Activated CD4-positive, alpha-beta T cell treated with anti-CD3 and anti-CD28 coated beads, Interleukin-2, amount 10 ng/mL, durations not matched to agents 7 days and 5 days (primary cell): ENCODE measurements at regions of chr3 and their contacts with region 1.

Region 1: GRCh38 chr3:10213156-10213792 is 35.0 kb upstream of the TATDN2 start:
- DNase-seq: no peak
- H3K4me3 Mint-ChIP-seq: no peak overlapping the region
- H3K27ac Mint-ChIP-seq: no peak overlapping the region
- H3K4me1 Mint-ChIP-seq: peaks cover 2% of the 10 kb centered on the region
- H3K27me3 Mint-ChIP-seq: no peaks in the 10 kb centered on the region

Region 2: GRCh38 chr3:10198761-10199649 is 14.3 kb before region 1 on chr3:
- CTCF ChIA-PET with region 1: interaction called, 11 read pairs
- POLR2A ChIA-PET with region 1: interaction called, 3 read pairs
- DNase-seq: peak; percentile 81
- H3K4me3 Mint-ChIP-seq: peak overlapping the region; percentile 13
- H3K27ac Mint-ChIP-seq: peak overlapping the region; percentile 94
- H3K4me1 Mint-ChIP-seq: peaks cover 77% of the 10 kb centered on the region
- H3K27me3 Mint-ChIP-seq: no peaks in the 10 kb centered on the region